ENCODE measurements at regions of chr17 and their contacts with region 1.

Region 1: DNA sequence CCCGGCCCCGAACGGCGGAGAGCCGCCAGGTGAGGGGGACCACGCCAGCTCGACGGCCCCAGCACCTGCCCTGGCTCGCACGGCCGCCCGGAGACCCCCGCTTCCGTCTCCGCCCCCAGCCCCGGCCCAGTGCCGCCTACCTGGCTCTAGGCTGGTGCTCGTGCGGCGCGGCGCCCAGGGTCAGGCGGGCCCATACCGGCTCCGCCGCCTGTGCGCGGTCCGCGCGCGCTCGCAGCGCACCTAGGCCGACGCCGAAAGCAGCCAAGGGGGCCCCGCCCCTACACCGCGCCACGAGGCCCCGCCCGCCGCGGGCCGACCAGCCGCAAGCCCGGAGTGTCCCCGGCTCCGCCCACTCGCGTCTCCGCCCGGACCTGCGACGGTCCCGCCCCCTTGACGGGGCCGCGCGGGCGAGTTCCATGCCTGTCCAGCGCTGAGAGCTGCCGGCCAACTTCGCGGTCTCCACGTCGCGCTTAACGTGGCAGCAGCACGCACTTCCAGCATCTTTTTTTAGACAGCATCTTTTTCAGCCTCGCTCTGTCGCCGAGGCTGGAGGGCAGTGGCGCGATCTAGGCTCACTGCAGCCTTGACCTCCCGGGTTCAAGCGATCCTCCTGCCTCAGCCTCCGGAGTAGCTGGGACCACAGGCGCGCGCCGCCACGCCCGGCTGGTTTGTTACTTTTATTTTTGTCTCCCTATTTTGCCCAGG is at the start of gene SLC25A39:
- DNase-seq: peak; percentile 97
- ATAC-seq: peak; percentile 72
- H3K4me3 ChIP-seq: peak within 1 kb of the TSS; percentile 35 to 85 (median 81)
- H3K4me3 Mint-ChIP-seq: peak within 1 kb of the TSS; percentile 92
- H3K27ac ChIP-seq: peak within 1 kb of the TSS; percentile 92 to 96
- H3K27ac Mint-ChIP-seq: peak within 1 kb of the TSS; percentile 98
- H3K4me1 ChIP-seq: peaks cover 9 to 30% of the 10 kb centered on the region in 2 donors
- H3K4me1 Mint-ChIP-seq: peaks cover 31% of the 10 kb centered on the region
- H3K27me3 ChIP-seq: no peaks in the 10 kb centered on the region
- H3K27me3 Mint-ChIP-seq: no peaks in the 10 kb centered on the region
- CTCF ChIP-seq: no peak
- total RNA-seq, gene SLC25A39: 86.6 and 88.4 TPM in 2 replicates

Region 2: DNA sequence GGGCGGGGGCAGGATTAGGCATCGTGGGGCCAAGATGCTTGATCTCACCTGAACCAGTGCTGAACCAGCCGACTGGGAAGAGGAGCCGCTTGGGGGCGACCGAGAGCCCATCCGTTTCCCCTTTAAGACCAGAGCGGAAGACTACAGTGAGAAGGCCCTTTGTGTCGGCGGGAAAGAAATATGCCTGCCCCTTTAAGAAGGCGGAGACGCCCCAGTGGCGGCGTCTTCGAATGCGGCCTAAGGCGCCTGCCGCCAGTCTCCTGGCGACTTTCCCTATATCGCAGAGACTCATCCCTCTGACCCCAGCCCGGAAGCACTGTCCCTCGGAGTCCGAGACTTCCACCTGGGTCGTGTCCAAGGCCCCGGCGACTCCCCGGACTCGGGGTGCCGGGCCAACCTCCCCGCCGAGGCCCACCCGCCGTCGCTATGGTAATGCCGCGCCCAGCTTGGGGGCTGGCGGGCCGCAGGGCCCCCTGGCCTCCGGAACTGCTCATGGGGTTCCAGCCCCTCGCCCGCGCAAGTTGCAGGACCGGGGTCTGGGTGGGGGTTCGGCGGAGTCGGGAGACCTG is 182.9 kb before region 1 on chr17 and contains the start of gene HROB:
- CTCF ChIA-PET with region 1: no interaction called
- POLR2A ChIA-PET with region 1: interaction called, 4 read pairs
- intact Hi-C with region 1: loop called (anchors 1 kb)
- DNase-seq: peak; percentile 97
- ATAC-seq: peak; percentile 99
- H3K4me3 ChIP-seq: peak within 1 kb of the TSS; percentile 41 to 85 (median 76)
- H3K4me3 Mint-ChIP-seq: peak within 1 kb of the TSS; percentile 87
- H3K27ac ChIP-seq: peak within 1 kb of the TSS; percentile 57 to 84
- H3K27ac Mint-ChIP-seq: peak within 1 kb of the TSS; percentile 61
- H3K4me1 ChIP-seq: peaks cover 9 to 11% of the 10 kb centered on the region in 2 donors
- H3K4me1 Mint-ChIP-seq: peaks cover 8% of the 10 kb centered on the region
- H3K27me3 ChIP-seq: peaks cover 0 to 20% (median 3%) of the 10 kb centered on the region in 4 experiments
- H3K27me3 Mint-ChIP-seq: peaks cover 14% of the 10 kb centered on the region
- CTCF ChIP-seq: peak; percentile 84
- total RNA-seq, gene HROB: 2.7 and 3.2 TPM in 2 replicates

Region 3: DNA sequence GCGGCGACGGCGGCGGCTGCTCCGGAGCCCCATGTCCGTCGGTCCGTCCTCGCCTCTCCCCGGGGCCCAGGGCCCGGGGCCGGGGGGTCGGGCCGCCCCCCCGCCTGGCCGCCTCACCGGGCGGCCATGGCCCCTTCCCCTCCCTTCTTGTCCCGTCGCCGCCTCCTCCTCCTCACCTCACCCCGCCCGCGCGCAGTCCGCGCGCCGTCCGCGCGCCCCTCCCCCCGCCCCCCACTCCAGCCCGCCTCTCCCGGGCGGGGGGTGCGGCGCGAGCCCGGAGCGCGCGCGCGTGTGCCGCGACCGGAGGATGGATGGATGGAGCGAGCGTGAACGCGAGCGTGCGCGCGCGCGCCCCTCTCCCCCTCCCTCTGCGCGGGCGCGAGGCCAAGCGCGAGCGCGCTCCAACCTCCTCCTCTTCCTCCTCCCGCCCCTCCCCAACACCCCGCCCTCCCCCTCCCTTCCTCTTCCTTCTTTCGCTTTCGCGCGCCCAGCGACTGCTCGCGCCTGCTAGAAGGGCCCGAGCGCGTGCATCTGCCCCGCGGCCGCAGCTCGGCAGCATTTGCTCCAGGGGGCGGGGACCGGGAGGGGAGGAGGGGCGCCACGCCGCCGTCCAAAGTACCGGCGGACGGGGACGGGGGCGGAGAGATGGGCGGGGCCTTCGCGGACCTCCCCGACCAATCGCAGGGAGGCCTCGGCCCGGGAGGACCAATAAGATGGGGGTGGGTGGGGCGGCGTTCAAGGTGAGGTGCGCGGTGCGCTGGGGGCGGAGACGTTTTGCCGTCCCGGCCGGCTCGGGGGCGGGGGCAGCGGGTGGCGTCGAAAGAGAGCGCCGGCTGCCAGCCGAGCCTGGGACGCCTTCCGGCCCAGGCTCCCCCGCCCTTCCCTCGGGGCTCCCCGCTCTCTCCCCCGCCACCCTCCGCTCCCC is 124.9 kb before region 1 on chr17 and contains the start of gene ATXN7L3:
- CTCF ChIA-PET with region 1: interaction called, 14 read pairs
- POLR2A ChIA-PET with region 1: interaction called, 8 read pairs
- intact Hi-C with region 1: loop called (anchors 1 kb)
- DNase-seq: peak; percentile 100
- ATAC-seq: peak; percentile 81
- H3K4me3 ChIP-seq: peak within 1 kb of the TSS; percentile 66 to 83 (median 81)
- H3K4me3 Mint-ChIP-seq: peak within 1 kb of the TSS; percentile 88
- H3K27ac ChIP-seq: peak within 1 kb of the TSS; percentile 89 to 90
- H3K27ac Mint-ChIP-seq: peak within 1 kb of the TSS; percentile 95
- H3K4me1 ChIP-seq: peaks cover 30 to 43% of the 10 kb centered on the region in 2 donors
- H3K4me1 Mint-ChIP-seq: peaks cover 46% of the 10 kb centered on the region
- H3K27me3 ChIP-seq: no peaks in the 10 kb centered on the region
- H3K27me3 Mint-ChIP-seq: no peaks in the 10 kb centered on the region
- CTCF ChIP-seq: no peak
- total RNA-seq, gene ATXN7L3: 107 and 119 TPM in 2 replicates

Region 4: GRCh38 chr17:44308320-44308818 is 16.4 kb before region 1 on chr17 and contains the start of gene RUNDC3A:
- CTCF ChIA-PET with region 1: no interaction called
- POLR2A ChIA-PET with region 1: interaction called, 5 read pairs
- intact Hi-C with region 1: loop called (anchors 1 kb)
- DNase-seq: peak; percentile 88
- ATAC-seq: peak; percentile 92
- H3K4me3 ChIP-seq: peak within 1 kb of the TSS in 3 of 5 experiments; percentile 20 to 38 (median 38)
- H3K4me3 Mint-ChIP-seq: peak within 1 kb of the TSS; percentile 44
- H3K27ac ChIP-seq: no peak within 1 kb of the TSS
- H3K27ac Mint-ChIP-seq: no peak within 1 kb of the TSS
- H3K4me1 ChIP-seq: peaks cover 18 to 20% of the 10 kb centered on the region in 2 donors
- H3K4me1 Mint-ChIP-seq: peaks cover 19% of the 10 kb centered on the region
- H3K27me3 ChIP-seq: peaks cover 0 to 50% (median 16%) of the 10 kb centered on the region in 4 experiments
- H3K27me3 Mint-ChIP-seq: peaks cover 46% of the 10 kb centered on the region
- CTCF ChIP-seq: no peak
- total RNA-seq, gene RUNDC3A: not detected in 2 replicates

Region 5: GRCh38 chr17:44350733-44351226 is 26.1 kb after region 1 on chr17:
- CTCF ChIA-PET with region 1: interaction called, 117 read pairs
- POLR2A ChIA-PET with region 1: interaction called, 11 read pairs
- intact Hi-C with region 1: loop called (anchors 1 kb)
- DNase-seq: peak; percentile 83
- ATAC-seq: peak; percentile 41
- H3K4me3 ChIP-seq: no peak overlapping the region
- H3K4me3 Mint-ChIP-seq: peak overlapping the region; percentile 35
- H3K27ac ChIP-seq: no peak overlapping the region
- H3K27ac Mint-ChIP-seq: peak overlapping the region; percentile 58
- H3K4me1 ChIP-seq: peaks cover 40 to 46% of the 10 kb centered on the region in 2 donors
- H3K4me1 Mint-ChIP-seq: peaks cover 38% of the 10 kb centered on the region
- H3K27me3 ChIP-seq: no peaks in the 10 kb centered on the region
- H3K27me3 Mint-ChIP-seq: no peaks in the 10 kb centered on the region
- CTCF ChIP-seq: peak; percentile 85

Region 6: GRCh38 chr17:44400226-44400847 is 75.6 kb after region 1 on chr17:
- CTCF ChIA-PET with region 1: no interaction called
- POLR2A ChIA-PET with region 1: no interaction called
- intact Hi-C with region 1: no loop called
- DNase-seq: no peak
- ATAC-seq: no peak
- H3K4me3 ChIP-seq: no peak overlapping the region
- H3K4me3 Mint-ChIP-seq: no peak overlapping the region
- H3K27ac ChIP-seq: no peak overlapping the region
- H3K27ac Mint-ChIP-seq: no peak overlapping the region
- H3K4me1 ChIP-seq: peaks cover 0 to 11% of the 10 kb centered on the region in 2 donors
- H3K4me1 Mint-ChIP-seq: peaks cover 7% of the 10 kb centered on the region
- H3K27me3 ChIP-seq: no peaks in the 10 kb centered on the region
- H3K27me3 Mint-ChIP-seq: no peaks in the 10 kb centered on the region
- CTCF ChIP-seq: peak; percentile 28

Measured in B cell (primary cell).